IMR-90 (cell line): ENCODE measurements at regions of chr2 and their contacts with region 1.

Region 1: DNA sequence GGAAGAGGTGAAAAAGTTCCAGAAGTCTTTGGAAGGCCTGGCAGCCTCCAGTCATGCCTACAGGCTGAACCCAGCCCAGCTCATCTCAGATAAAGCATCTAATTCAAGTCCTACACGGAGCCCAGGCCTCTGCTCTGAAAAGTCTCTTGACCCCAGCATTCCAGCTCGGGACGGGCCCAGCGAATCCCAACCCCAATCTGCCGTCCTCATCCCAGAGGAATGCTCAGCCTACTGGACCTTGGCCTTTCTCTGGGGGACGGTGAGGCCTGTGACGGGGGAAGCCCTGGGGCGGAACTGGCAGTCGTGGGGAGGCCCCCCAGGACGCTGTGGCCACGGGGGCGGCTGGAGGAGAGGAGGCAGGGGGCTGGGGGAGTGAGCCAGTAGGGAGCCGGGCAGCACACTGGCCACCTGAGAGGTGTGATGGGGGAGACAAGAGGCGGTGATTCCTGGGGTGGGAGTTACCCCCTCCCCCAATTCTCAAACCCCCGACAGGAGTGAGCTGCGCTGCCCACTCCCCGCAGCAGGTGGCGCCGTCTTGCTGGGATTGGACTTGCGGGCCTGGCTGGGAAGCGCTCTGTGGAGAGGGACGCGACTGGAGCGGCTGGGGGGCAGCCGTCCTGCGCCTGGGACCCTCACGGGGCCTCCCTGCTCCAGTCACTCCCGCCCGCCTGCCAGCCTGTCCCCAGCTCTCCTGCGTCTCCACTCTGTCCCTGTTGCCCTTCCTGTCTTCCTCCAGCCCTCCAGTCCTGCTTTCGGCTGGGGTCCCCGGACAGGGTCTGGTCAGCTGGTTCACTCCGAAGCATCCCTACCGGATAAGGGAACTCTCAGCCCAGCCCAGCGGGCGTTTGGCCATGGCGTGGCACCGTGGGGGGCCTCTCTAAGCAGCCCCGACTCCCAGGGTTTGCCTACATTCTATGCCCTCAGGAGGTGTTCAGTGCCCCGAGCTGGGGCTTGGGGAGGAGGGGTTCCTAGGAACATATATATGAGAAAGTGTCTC is 182.6 kb upstream of the HAAO start:
- DNase-seq: peak; percentile 63
- ATAC-seq: peak; percentile 91
- H3K4me3 ChIP-seq: peak overlapping the region; percentile 15; the same call in 1 of the 2 replicates
- H3K27ac ChIP-seq: peak overlapping the region; percentile 79
- H3K4me1 ChIP-seq: peaks cover 20% of the 10 kb centered on the region
- H3K27me3 ChIP-seq: no peaks in the 10 kb centered on the region
- CTCF ChIP-seq: peak; percentile 88
- POLR2A ChIP-seq: peak; percentile 54; the same call in 1 of the 2 replicates
- RAD21 ChIP-seq: peak; percentile 97

Region 2: DNA sequence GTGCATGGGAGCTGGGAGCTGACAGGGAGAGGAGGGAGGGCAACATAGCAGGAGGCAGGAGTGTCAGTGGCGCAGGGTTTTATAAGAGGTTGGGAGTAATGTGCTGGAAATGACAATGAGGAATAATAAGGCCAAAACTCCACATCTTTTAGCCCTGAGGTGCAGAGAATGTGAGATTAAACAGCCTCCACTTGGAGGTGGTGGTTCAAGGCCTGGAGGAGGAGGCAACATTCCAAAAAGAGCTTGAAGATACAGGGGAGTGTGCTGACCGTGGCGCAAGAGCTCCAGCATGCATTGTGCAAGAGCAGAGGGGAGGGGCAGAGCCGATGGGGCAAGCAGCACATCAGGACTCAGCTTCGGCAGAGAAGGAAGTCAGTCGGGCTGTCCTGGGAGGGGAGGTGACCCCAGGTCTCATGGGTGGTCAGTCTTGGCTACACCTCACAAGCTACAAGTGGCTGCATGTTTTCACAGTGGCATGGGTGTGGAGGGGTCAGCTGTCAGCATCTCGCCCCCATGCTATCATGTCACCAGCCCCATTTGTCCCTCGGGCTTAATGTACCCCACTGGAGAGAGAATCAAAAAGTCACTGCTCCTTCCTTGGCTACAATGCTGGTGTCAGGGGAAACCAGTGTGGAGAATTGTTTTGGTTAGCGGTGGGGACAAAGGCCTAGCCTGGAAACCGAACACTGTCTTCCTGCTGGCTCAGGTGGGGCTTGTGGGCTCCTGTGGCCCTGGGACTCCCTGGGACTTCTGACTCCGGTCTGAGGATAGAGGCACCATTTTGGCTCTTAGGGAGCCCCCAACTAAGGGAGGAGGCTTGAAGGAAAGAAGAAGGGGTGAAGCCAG is 43.4 kb after region 1 on chr2:
- CTCF ChIA-PET with region 1: no interaction called
- POLR2A ChIA-PET with region 1: interaction called, 3 read pairs
- dilution Hi-C with region 1: no loop called
- in situ Hi-C with region 1: no loop called
- intact Hi-C with region 1: loop called (anchors 5 kb)
- DNase-seq: peak; percentile 84
- ATAC-seq: peak; percentile 96
- H3K4me3 ChIP-seq: no peak overlapping the region
- H3K27ac ChIP-seq: peak overlapping the region; percentile 39; the same call in 1 of the 2 replicates
- H3K4me1 ChIP-seq: peaks cover 10% of the 10 kb centered on the region
- H3K27me3 ChIP-seq: no peaks in the 10 kb centered on the region
- CTCF ChIP-seq: no peak
- POLR2A ChIP-seq: no peak
- RAD21 ChIP-seq: no peak

Region 3: DNA sequence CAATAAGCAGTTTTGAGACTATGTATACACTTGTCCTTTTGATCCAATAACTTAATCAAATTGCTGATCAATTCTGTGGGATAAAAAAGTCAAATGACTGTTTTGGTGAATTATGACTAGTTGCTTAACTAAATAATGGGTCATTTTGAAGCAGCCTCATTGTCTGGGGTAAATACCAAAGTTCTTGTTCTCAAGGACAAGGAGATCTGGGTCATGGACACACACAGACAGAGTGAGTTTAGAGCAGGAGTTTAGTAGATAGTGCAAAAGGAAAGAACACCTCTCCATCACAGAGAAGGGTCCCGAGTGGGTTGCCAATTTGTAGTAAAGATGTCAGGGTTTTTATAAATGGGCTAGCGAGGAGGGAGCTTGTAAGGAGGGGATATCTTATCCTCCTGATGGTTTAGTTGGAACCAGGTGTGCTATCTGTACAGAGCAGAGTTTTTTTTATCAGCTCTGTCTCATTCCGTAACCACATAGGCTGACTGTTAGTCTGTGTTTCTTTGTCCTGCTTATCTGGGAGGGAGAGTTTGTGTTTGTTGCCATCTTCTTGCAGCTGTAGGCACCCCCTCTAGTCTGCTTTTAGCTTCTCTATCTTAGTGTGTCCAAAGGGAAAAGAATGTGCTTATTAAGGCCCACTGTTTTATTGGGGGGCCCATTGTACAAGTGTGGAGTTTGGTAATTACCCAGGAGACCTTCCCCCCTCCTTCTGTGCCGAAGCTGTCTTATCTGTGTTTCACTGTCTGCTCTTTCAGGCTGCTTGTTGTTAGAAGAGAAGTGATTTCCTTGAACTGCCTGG is 749.9 kb after region 1 on chr2:
- CTCF ChIA-PET with region 1: no interaction called
- POLR2A ChIA-PET with region 1: no interaction called
- dilution Hi-C with region 1: no loop called
- in situ Hi-C with region 1: no loop called
- intact Hi-C with region 1: no loop called
- DNase-seq: no peak
- ATAC-seq: no peak
- H3K4me3 ChIP-seq: no peak overlapping the region
- H3K27ac ChIP-seq: no peak overlapping the region
- H3K4me1 ChIP-seq: peaks cover 3% of the 10 kb centered on the region; the same call in 1 of the 2 replicates
- H3K27me3 ChIP-seq: no peaks in the 10 kb centered on the region
- CTCF ChIP-seq: no peak
- POLR2A ChIP-seq: no peak
- RAD21 ChIP-seq: no peak